ENCODE measurements at regions of chr11 and their contacts with region 1.

Region 1: DNA sequence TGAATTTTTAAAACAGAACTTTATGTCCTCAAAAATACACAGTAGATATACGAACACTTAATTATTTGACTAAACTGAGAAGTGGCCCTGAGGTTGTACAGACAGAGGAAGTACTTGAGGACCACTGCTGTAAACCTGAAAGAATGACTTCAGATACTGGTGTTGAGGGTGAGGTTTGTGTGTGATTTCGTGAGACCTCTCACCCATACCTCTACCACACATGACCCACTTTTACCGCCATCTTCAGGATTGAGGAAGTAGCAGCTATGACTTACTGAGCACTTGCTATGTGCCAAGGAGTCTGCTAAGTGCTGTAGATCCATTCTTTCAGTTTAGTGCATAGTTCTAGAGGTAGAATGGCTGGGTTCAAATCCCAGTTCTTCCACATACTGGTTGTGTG is 21.9 kb downstream of the MMP13 start:
- DNase-seq: no peak
- ATAC-seq: no peak
- H3K4me3 ChIP-seq: no peak overlapping the region
- H3K27ac ChIP-seq: no peak overlapping the region
- H3K4me1 ChIP-seq: no peaks in the 10 kb centered on the region
- H3K27me3 ChIP-seq: no peaks in the 10 kb centered on the region
- CTCF ChIP-seq: no peak
- EP300 ChIP-seq: no peak
- POLR2A ChIP-seq: no peak
- RAD21 ChIP-seq: no peak

Region 2: DNA sequence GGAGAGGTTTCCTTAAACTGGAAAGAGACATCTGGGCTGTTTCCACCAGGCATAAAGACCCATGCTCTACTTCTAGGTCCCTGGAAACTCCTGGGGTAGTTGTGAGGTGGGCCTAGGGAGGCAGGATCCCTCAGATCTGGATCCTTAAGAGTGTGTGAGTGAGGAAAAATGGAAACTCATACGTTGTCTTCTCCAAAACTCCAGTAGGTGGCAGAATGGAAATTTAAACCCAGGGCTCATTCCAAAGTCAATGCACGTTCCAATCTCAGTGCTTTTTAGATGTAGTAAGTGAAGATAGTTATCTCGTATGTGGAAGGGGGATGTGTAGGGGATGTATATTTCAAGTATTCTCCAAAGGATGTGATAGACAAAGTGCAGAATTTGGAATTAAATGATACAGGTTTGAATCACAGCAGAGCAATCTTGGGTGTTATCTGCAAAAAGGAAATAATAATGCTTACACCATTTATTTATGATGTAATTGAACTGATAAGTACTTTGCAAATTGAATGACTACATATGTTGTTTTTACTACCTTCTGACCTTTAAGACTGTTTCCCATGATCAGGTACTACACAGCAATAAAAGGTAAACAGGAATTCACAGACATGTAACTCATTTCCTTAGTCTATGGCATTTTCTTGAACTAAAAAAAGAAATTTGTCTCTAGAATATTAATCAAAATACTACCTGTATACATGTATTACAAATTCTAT is 122.5 kb before region 1 on chr11:
- CTCF ChIA-PET with region 1: no interaction called
- POLR2A ChIA-PET with region 1: no interaction called
- in situ Hi-C with region 1: loop called (anchors 10 kb)
- intact Hi-C with region 1: no loop called
- DNase-seq: peak; percentile 12
- ATAC-seq: peak; percentile 68
- H3K4me3 ChIP-seq: no peak overlapping the region
- H3K27ac ChIP-seq: no peak overlapping the region
- H3K4me1 ChIP-seq: no peaks in the 10 kb centered on the region
- H3K27me3 ChIP-seq: peaks cover 0 to 4% of the 10 kb centered on the region in 2 experiments; a peak in 2 of 5 replicates
- CTCF ChIP-seq: peak; percentile 51
- EP300 ChIP-seq: no peak
- POLR2A ChIP-seq: no peak
- RAD21 ChIP-seq: no peak

Region 3: DNA sequence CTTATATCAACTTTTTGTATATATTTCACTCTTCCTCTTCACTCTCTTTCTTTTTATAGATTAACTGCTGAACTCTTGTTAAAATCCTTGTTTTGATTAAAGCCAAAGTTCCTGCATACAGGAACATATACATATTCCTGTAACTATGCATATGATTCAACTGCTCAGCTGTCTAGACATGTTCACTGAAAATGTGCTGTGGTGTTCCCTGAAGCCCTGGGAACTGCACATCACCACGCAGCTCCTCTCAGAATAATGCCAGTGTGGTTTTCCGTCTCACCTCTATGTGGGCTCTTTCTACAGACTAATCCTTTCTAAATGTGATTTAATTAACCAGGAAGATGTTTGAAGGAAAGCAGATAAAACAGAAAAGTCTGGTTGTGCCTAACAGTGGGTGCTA is 33.3 kb before region 1 on chr11:
- CTCF ChIA-PET with region 1: no interaction called
- POLR2A ChIA-PET with region 1: no interaction called
- in situ Hi-C with region 1: no loop called
- intact Hi-C with region 1: no loop called
- DNase-seq: no peak
- ATAC-seq: no peak
- H3K4me3 ChIP-seq: no peak overlapping the region
- H3K27ac ChIP-seq: no peak overlapping the region
- H3K4me1 ChIP-seq: no peaks in the 10 kb centered on the region
- H3K27me3 ChIP-seq: no peaks in the 10 kb centered on the region
- CTCF ChIP-seq: no peak
- EP300 ChIP-seq: no peak
- POLR2A ChIP-seq: no peak
- RAD21 ChIP-seq: no peak

Measured in HepG2 (cell line).